ENCODE measurements at regions of chr22 and their contacts with region 1.

Region 1: DNA sequence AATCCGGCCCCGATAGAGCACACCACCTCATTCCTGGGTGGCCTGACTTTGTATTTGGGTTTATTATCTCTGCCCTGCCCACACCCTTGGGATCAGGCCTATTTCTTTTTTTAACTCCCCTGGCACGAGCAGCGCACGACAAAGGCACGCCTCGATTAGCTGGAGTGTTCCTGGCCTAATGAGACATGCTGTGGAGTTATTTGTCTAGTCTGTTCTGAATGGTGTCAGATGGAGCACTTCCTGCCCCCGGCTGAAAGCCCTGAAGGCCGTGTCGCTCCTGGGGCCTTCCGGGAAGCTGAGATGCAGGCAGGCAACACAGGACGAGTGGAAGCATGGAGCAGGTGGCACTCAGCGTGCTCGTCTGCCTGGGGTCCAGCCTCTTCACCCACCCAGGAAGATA is 47.1 kb downstream of the LARGE1 start:
- DNase-seq: peak in 1 of 2 donors; percentile 72
- H3K4me3 ChIP-seq: peak overlapping the region in 1 of 2 donors; percentile 20
- H3K27ac ChIP-seq: peak overlapping the region; percentile 85 to 87
- H3K4me1 ChIP-seq: peaks cover 3 to 36% of the 10 kb centered on the region in 2 donors
- H3K27me3 ChIP-seq: no peaks in the 10 kb centered on the region
- CTCF ChIP-seq: no peak

Region 2: GRCh38 chr22:33666279-33666960 is 206.8 kb before region 1 on chr22:
- intact Hi-C with region 1: no loop called
- DNase-seq: no peak
- H3K4me3 ChIP-seq: no peak overlapping the region
- H3K27ac ChIP-seq: no peak overlapping the region
- H3K4me1 ChIP-seq: peaks cover 0 to 4% of the 10 kb centered on the region in 2 donors
- H3K27me3 ChIP-seq: no peaks in the 10 kb centered on the region
- CTCF ChIP-seq: no peak

Region 3: GRCh38 chr22:33785283-33785968 is 87.8 kb before region 1 on chr22:
- intact Hi-C with region 1: no loop called
- DNase-seq: no peak
- H3K4me3 ChIP-seq: no peak overlapping the region
- H3K27ac ChIP-seq: no peak overlapping the region
- H3K4me1 ChIP-seq: peaks cover 0 to 4% of the 10 kb centered on the region in 2 donors
- H3K27me3 ChIP-seq: no peaks in the 10 kb centered on the region
- CTCF ChIP-seq: no peak

Region 4: DNA sequence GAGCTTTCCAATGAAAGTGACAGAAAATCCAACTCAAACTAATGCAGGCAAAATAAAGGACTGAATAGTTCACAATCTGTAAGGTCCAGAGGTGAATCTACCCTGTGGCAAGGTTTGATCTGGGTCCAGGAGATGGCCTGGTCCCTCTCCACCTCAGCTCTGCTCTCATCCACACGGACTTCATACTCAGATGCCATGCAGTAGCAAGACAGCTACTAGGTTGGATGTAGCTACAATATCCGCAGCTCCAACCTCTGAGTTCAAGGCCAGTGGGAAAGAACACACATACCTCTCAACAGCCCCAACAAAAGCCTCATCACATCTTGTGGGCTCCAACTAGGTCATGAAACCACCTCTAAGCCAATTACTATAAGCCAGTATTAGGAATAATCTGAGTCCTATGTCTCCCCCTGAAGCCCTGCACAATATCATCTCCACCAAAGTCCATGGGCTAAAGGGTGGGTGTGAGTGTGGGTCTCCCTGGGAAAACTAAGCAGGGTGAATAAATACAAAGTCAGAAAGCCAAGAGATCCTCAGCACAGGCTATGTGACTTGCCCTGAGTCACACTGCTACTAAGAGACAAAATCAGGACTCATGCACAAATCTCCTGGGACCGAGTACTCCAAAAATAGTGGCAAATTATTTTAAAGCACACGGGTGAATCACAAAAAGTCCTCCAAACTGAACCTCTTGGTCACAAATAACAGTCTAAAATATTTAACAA is 31.7 kb before region 1 on chr22:
- intact Hi-C with region 1: loop called (anchors 2 kb)
- DNase-seq: no peak
- H3K4me3 ChIP-seq: peak overlapping the region in 1 of 2 donors; percentile 28
- H3K27ac ChIP-seq: peak overlapping the region; percentile 49 to 66
- H3K4me1 ChIP-seq: peaks cover 3 to 18% of the 10 kb centered on the region in 2 donors
- H3K27me3 ChIP-seq: no peaks in the 10 kb centered on the region
- CTCF ChIP-seq: no peak

Region 5: GRCh38 chr22:33909075-33909458 is 35.9 kb after region 1 on chr22:
- intact Hi-C with region 1: loop called (anchors 2 kb)
- DNase-seq: peak in 1 of 2 donors; percentile 77
- H3K4me3 ChIP-seq: peak overlapping the region in 1 of 2 donors; percentile 16
- H3K27ac ChIP-seq: peak overlapping the region; percentile 74 to 79
- H3K4me1 ChIP-seq: peaks cover 4 to 21% of the 10 kb centered on the region in 2 donors
- H3K27me3 ChIP-seq: no peaks in the 10 kb centered on the region
- CTCF ChIP-seq: no peak